Heart right ventricle (tissue), 16 donors: ENCODE measurements at regions of chr1 and their contacts with region 1.

Region 1: DNA sequence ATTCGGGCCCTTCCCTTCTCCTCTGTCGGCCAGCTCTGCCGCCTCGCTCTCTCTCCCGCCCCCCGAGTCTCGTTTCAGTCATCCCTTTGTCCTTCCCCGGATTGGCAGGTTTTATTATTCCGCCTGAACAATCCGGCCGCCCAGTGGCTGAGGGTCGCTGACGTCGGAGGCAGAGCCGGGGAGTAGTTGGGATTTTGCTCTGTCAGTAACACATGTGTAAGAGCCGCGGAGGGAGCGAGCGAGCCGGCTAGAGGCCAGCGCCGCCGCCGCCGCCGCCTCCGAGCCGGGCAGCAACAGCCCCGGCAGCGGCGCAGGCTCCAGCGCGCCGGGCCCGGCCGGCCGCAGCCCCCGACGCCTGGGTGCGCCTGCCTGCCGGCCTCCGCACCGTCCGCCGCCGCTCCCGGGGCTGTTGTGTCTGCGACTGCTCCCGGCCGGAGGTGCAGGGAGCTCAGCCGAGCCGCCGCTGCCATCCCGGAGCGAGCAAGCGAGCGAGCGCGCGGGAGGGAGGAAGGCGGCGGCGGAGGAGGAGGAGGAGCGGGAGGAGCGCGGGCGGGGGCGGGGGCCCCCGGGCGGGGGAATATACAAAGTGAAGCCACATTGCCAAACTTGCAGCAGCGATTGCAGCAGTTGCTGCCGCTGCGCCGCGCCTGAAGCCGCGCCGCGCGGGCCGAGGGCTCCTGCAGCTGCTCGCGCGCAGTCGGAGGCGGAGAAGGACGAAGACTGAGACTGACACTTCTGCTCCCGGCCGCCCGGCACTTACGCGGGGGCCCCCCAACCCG is at the start of gene LMO4:
- DNase-seq: peak; percentile 94 to 97
- ATAC-seq: peak; percentile 86 to 95 (median 91)
- H3K4me3 ChIP-seq: peak within 1 kb of the TSS; percentile 64 to 88 (median 82)
- H3K27ac ChIP-seq: peak within 1 kb of the TSS; percentile 91 to 97 (median 96)
- H3K4me1 ChIP-seq: peaks cover 0 to 41% (median 22%) of the 10 kb centered on the region in 9 donors
- H3K27me3 ChIP-seq: no peaks in the 10 kb centered on the region
- CTCF ChIP-seq: no peak
- total RNA-seq, gene LMO4: 19.8 to 60.5 (median 27.7) TPM

Region 2: DNA sequence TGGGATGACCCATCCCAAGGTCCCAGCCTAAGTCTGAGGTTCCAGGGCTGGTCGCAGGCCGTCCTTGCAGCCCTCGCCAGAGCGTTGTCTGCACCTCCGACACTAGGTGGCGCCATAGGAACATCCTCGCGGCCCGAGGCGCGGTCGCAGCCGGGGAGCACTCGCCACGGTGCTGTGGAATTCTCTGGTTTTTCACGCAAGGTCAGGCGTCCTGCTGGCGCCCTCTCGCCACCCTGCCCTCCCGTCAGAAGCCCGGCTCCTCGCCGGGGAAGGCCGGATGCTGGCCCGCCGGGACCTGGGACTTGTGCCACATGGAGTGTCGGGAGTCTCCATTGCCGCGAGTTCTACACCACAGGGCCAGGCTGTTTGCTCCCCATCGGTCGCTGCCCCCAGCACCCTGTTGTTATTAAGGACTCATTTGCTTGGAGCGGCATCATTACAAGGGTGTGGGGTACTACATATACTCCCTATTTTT is 196.6 kb before region 1 on chr1:
- intact Hi-C with region 1: loop called in 2 of 10 experiments (anchors 2 to 5 kb)
- DNase-seq: peak; percentile 81 to 84
- ATAC-seq: peak; percentile 87 to 95 (median 91)
- H3K4me3 ChIP-seq: peak overlapping the region; percentile 21 to 63 (median 50)
- H3K27ac ChIP-seq: peak overlapping the region; percentile 5 to 85 (median 68)
- H3K4me1 ChIP-seq: peaks cover 0 to 52% (median 22%) of the 10 kb centered on the region in 9 donors
- H3K27me3 ChIP-seq: peaks cover 0 to 9% (median 0%) of the 10 kb centered on the region in 7 donors
- CTCF ChIP-seq: peak; percentile 85 to 97 (median 93)

Region 3: DNA sequence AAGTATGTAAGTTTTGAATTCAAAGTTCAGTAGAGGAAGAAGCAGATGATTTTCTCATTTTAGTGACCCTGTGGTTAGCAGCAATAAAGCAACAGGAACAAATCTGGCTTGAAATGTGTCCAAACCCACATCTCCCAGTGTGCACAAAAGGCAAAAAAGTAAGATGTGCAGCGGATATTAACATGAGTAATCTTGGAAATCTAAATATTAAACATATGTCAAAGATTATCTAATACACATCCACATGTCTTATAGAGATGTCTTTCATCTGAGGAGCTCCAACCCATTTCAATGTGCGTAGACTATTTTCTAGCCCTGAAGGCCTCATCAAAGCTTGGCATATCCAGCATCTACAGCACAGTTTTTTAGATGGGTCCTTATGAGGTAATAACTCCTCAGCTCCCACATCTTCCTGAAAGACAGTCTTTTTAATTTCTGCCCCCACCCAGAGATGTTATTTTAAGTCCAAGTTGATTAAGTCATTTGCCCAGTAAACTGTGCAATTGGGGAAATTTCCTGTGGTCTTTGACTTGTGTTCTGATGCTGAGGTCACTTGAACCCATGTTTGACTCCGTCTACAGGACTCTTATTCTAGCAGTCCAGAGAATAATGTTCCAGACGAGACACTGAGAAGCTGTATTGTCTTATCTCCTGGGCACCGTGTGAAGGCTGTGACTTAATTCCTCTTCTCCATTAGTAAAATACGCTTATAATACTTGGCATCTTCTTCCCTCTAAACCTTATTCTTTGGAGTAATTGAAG is 74.0 kb after region 1 on chr1:
- intact Hi-C with region 1: loop called in 1 of 10 experiments (anchors 5 kb)
- DNase-seq: peak in 1 of 2 donors; percentile 21
- ATAC-seq: peak in 5 of 8 donors; percentile 37 to 78 (median 58)
- H3K4me3 ChIP-seq: no peak overlapping the region
- H3K27ac ChIP-seq: peak overlapping the region in 5 of 10 donors; percentile 9 to 46 (median 18)
- H3K4me1 ChIP-seq: peaks cover 0 to 17% (median 4%) of the 10 kb centered on the region in 9 donors
- H3K27me3 ChIP-seq: no peaks in the 10 kb centered on the region
- CTCF ChIP-seq: no peak

Region 4: DNA sequence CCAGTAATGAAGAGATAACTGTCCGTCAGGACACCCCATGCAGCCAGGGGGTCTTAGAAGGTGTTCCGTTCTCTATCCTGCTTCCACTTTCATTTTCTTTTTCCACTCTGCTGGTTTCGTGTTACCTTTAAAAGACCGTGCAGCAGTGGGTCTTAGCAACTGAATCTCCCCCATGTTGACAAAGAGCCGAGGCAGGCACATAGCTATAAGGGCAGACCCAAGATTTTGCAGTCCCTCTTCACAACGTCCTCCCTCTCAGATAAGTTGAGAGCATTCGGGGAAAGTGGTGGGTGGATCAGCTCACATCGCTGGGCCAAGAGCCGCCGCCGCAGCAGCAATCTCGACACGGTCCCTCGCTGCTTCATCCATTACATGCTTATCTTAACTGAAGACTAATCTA is 355.7 kb after region 1 on chr1:
- intact Hi-C with region 1: loop called in 2 of 10 experiments (anchors 5 to 10 kb)
- DNase-seq: peak in 1 of 2 donors; percentile 9
- ATAC-seq: peak in 7 of 8 donors; percentile 55 to 77 (median 71)
- H3K4me3 ChIP-seq: peak overlapping the region; percentile 2 to 57 (median 52)
- H3K27ac ChIP-seq: peak overlapping the region in 8 of 10 donors; percentile 2 to 77 (median 58)
- H3K4me1 ChIP-seq: peaks cover 0 to 22% (median 10%) of the 10 kb centered on the region in 9 donors
- H3K27me3 ChIP-seq: no peaks in the 10 kb centered on the region
- CTCF ChIP-seq: no peak

Region 5: GRCh38 chr1:88052167-88052566 is 723.7 kb after region 1 on chr1:
- intact Hi-C with region 1: loop called in 1 of 10 experiments (anchors 10 kb)
- DNase-seq: no peak
- ATAC-seq: no peak
- H3K4me3 ChIP-seq: no peak overlapping the region
- H3K27ac ChIP-seq: no peak overlapping the region
- H3K4me1 ChIP-seq: peaks cover 0 to 3% (median 0%) of the 10 kb centered on the region in 9 donors
- H3K27me3 ChIP-seq: no peaks in the 10 kb centered on the region
- CTCF ChIP-seq: no peak

Region 6: GRCh38 chr1:88499671-88500070 is 1171.2 kb after region 1 on chr1:
- intact Hi-C with region 1: loop called in 1 of 10 experiments (anchors 2 kb)
- DNase-seq: no peak
- ATAC-seq: no peak
- H3K4me3 ChIP-seq: no peak overlapping the region
- H3K27ac ChIP-seq: no peak overlapping the region
- H3K4me1 ChIP-seq: peaks cover 0 to 3% (median 0%) of the 10 kb centered on the region in 9 donors
- H3K27me3 ChIP-seq: no peaks in the 10 kb centered on the region
- CTCF ChIP-seq: no peak